ENCODE measurements at regions of chr13 and their contacts with region 1.

Region 1: GRCh38 chr13:49443704-49444523 is at the starts of genes CAB39L and SETDB2:
- DNase-seq: peak; percentile 91
- H3K4me3 ChIP-seq: peak within 1 kb of the TSS; percentile 88
- CTCF ChIP-seq: peak; percentile 49

Region 2: GRCh38 chr13:48334534-48335127 is 1109.3 kb before region 1 on chr13:
- CTCF ChIA-PET with region 1: no interaction called
- POLR2A ChIA-PET with region 1: no interaction called
- DNase-seq: no peak
- H3K4me3 ChIP-seq: no peak overlapping the region
- CTCF ChIP-seq: peak; percentile 6

Region 3: DNA sequence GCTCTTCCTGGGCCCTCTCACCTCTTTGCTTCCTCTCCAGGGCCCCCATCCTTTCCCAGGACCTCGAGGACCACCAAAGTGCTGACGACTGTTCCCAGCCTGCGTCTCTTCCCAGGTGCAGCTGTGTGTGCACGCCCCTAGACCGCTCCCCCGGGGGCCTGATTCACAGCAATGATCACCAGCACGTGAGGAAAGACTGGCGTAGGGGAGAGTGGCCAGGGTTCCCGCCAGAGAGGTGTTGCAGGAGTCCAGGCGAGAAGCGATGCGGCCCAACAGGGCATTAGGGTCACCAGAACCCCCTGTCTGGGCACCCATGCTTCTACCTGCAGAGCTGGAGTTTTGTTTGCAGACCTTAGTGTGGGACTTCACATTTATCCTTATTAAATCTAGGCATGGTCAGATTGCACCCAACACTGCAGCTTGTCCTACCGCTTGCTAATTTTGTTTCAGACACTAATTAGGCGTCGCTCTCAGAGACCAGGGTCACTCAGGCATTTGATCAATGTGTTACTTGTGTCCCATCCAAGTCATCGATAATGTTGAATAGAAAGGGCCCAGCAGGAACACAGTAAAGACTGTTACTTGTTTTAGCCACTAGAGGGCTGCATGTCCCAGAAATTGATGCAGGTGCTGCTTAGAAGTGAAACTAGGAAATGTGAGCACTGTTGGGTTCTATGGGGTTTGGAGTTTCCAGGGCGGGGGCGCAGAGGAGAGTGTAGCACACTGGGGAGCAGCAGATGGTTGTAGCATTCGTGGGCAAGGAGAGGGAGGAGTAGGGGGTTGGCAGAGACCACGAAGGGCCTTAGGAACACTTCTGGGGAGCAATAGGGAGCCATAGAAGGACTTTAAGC is 142.9 kb before region 1 on chr13:
- CTCF ChIA-PET with region 1: interaction called, 46 read pairs
- POLR2A ChIA-PET with region 1: no interaction called
- DNase-seq: no peak
- H3K4me3 ChIP-seq: no peak overlapping the region
- CTCF ChIP-seq: peak; percentile 76

Region 4: DNA sequence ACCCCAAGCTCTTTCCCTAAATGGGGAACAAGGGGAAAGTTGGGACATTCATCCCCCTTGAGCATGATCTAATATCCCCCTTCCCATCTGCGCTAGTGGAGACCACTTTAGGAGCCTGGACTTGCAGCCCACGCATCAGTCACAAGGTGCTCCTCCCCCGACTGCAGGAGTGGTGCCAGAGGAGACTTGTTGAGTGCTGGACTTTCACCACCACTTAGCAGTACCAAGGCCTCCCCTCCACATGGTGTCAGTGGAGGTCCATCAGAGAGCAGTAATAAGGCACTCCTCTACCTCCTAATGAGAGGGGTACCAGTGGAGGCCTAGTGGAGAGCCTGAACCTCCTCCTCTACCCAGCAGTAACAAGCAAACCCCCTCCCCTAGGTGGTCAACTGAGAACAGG is 22.5 kb before region 1 on chr13:
- CTCF ChIA-PET with region 1: no interaction called
- POLR2A ChIA-PET with region 1: no interaction called
- DNase-seq: no peak
- H3K4me3 ChIP-seq: no peak overlapping the region
- CTCF ChIP-seq: no peak

Region 5: GRCh38 chr13:49454388-49455006 is 10.6 kb after region 1 on chr13:
- CTCF ChIA-PET with region 1: interaction called, 10 read pairs
- POLR2A ChIA-PET with region 1: interaction called, 3 read pairs
- DNase-seq: no peak
- H3K4me3 ChIP-seq: no peak overlapping the region; the same call in 1 of the 2 replicates
- CTCF ChIP-seq: no peak

Region 6: DNA sequence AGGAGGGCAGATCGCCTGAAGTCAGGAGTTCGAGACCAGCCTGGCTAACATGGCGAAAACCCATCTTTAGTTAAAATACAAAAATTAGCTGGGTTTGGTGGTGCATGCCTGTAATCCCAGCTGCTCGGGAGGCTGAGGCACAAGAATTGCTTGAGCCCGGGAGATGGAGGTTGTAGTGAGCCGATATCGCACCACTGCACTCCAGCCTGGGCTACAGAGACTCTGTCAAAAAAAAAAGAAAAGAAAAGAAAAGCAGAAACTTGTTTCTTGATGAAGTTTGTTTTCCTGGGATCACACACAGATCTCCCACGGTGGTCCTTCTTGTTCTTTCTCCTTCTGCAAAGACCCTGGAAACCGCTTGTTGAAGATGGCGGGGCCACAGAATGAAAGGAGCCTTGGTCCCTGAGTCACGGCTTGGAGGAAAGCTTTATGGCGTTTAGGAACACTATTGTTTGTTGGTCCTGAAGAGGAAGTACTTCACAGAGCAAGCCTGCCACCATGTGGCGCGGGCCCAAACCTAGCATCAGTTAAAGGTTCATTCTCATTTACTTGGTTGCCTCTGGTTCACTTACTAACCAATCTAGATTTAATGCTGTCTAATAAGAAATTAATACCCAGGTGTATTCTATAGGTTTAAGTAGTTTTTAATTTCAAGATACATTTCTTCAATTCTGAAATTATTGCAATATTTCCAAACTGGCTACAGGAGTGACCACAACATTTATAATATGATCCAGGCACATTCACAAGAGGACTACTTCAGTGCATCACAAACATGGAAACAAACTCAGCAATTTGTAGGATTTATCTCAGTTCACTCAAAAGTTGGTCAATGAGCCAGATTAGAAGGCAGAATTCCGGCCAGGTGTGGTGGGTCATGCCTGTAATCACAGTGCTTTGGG is 163.1 kb after region 1 on chr13:
- CTCF ChIA-PET with region 1: interaction called, 38 read pairs
- POLR2A ChIA-PET with region 1: no interaction called
- DNase-seq: peak; percentile 44
- H3K4me3 ChIP-seq: peak overlapping the region; percentile 12; the same call in 1 of the 2 replicates
- CTCF ChIP-seq: peak; percentile 81